GM12878 (cell line): ENCODE measurements at regions of chr5 and their contacts with region 1.

Region 1: DNA sequence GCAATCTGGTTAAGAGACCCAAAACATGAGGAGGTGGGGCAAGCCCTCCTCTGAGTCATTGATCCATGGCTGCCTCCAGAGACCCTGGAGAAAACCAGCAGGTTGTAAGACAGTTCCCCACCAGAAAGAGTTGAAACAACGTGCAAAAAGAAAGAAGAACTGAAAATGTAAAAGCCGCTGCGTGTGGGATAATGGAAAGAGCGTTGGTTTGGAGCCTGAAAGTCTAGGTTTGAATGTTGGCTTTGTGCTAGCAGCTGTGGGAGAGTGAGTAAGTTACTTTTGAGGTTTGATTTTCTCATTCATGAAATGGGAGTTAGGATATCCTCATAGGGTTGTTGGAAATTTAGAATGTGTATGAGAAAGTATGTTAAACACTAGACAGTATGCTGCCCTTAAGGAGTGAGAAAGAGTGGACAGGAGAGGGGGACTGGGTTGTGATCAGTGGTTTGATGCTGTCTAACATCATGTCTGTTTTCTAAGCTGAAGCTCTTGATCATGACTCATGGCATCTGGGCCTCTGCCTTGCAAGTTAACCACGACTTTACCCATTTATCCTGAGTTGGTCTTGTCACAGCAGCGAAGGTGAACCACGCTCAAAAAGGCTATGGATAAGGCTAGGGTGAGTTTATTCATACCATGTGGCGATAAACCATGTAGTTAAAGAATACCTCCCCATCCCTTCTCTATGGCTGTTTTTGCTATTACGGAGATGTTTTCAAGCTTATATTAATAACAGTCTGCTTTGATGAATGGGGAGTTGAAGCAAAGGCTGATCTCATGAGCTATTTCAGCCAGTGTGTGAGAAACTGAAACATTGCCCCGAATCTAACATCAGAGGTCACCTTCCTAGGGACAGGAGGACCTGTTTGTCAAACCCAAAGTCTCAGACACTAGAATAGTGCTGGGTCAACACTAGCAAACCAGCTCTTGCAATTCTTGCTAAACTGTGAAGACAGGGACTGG is 41.3 kb downstream of the ZNF366 start:
- DNase-seq: peak; percentile 92
- ATAC-seq: peak; percentile 83
- H3K4me3 ChIP-seq: peak overlapping the region; percentile 43
- H3K27ac ChIP-seq: peak overlapping the region; percentile 98
- H3K4me1 ChIP-seq: peaks cover 44% of the 10 kb centered on the region
- H3K27me3 ChIP-seq: no peaks in the 10 kb centered on the region
- CTCF ChIP-seq: no peak
- EP300 ChIP-seq: peak; percentile 85 to 92
- POLR2A ChIP-seq: peak; percentile 39; the same call in 1 of the 2 replicates
- RAD21 ChIP-seq: peak; percentile 35; the same call in 1 of the 2 replicates

Region 2: DNA sequence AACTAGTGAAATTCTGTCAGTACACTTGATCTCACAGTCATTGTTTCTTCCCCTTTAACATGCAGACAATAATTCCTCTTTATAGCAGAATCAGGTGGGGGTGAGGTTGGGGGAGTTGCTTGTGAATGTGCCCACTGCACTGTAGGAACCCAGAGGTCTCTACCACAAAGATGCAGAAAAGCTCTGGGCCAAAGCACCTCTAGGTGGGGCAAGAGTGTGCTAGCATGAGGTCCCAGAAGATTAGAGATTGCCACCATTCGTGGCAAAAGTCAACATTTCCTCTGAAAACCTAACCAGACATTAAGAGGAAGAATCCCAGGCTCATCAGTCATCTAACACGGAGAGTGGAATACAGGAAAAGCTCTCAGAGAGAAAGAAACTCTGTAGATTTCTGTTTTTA is 71.2 kb before region 1 on chr5:
- CTCF ChIA-PET with region 1: interaction called, 6 read pairs
- POLR2A ChIA-PET with region 1: no interaction called
- RAD21 ChIA-PET with region 1: interaction called, 14 read pairs
- SMC1A ChIA-PET with region 1: interaction called, 10 read pairs
- in situ Hi-C with region 1: no loop called
- intact Hi-C with region 1: loop called (anchors 5 kb)
- DNase-seq: no peak
- ATAC-seq: peak; percentile 89
- H3K4me3 ChIP-seq: no peak overlapping the region
- H3K27ac ChIP-seq: no peak overlapping the region
- H3K4me1 ChIP-seq: no peaks in the 10 kb centered on the region
- H3K27me3 ChIP-seq: no peaks in the 10 kb centered on the region
- CTCF ChIP-seq: peak; percentile 70 to 74 (median 74)
- EP300 ChIP-seq: no peak
- POLR2A ChIP-seq: no peak
- RAD21 ChIP-seq: peak; percentile 84

Region 3: DNA sequence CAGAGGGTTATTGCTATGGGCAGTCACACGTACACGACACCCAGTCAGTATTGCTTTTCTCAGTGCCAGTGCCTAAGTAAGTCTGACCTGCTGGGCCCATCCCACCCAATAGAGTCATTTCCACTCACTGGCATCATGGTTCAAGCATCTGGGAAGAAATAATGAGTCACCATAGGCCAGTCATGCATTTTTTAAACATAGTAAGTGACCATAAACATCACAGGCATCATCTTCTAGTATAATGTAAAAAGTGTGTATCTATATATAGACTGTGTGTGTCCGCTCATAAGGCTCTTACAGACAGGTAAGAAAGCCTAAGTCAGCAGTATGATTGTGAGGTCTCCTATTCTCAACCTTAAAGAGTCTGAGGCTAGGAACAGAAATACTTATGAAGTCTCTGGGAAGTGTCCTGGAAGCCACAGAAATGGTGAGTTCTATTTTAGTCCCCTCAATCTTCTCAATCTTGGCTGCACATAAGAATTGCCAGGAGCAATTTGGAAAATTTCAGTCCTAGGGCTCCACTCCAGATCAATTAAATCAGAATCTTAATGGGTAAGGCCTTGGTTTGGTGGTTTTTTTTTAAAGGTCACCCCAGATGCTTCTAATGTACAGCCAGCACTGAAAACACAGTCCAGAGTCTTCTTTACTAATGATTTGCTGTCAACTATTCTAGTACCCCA is 23.9 kb before region 1 on chr5:
- CTCF ChIA-PET with region 1: interaction called, 7 read pairs
- POLR2A ChIA-PET with region 1: interaction called, 5 read pairs
- RAD21 ChIA-PET with region 1: interaction called, 24 read pairs
- SMC1A ChIA-PET with region 1: interaction called, 68 read pairs
- in situ Hi-C with region 1: no loop called
- intact Hi-C with region 1: loop called (anchors 5 kb)
- DNase-seq: no peak
- ATAC-seq: peak; percentile 13; the same call in 2 of the 3 replicates
- H3K4me3 ChIP-seq: no peak overlapping the region
- H3K27ac ChIP-seq: no peak overlapping the region
- H3K4me1 ChIP-seq: peaks cover 41% of the 10 kb centered on the region
- H3K27me3 ChIP-seq: no peaks in the 10 kb centered on the region
- CTCF ChIP-seq: no peak
- EP300 ChIP-seq: no peak
- POLR2A ChIP-seq: no peak
- RAD21 ChIP-seq: no peak

Region 4: DNA sequence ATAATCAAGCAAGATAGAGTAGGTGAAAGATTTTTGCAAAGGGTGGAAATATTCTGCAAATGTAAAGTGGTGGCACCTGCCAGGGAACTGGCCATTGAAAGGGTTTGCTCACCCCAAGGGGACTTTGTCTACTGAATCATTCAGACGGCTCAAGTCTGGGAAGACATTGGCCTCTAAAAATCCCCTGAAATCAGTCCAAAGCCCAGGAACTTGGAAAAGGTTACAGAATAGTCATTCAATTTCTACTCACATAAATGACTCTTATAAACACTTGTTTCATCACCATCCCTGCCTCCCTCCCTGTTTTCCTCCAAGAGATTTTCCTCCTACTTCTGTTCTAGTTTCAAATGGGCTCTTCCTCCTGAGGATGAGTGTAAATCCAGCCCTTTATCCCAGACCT is 12.8 kb after region 1 on chr5:
- CTCF ChIA-PET with region 1: interaction called, 4 read pairs
- POLR2A ChIA-PET with region 1: interaction called, 22 read pairs
- RAD21 ChIA-PET with region 1: interaction called, 38 read pairs
- SMC1A ChIA-PET with region 1: interaction called, 76 read pairs
- in situ Hi-C with region 1: no loop called
- intact Hi-C with region 1: loop called (anchors 1 kb)
- DNase-seq: no peak
- ATAC-seq: no peak
- H3K4me3 ChIP-seq: no peak overlapping the region
- H3K27ac ChIP-seq: no peak overlapping the region
- H3K4me1 ChIP-seq: peaks cover 31% of the 10 kb centered on the region
- H3K27me3 ChIP-seq: no peaks in the 10 kb centered on the region
- CTCF ChIP-seq: no peak
- EP300 ChIP-seq: no peak
- POLR2A ChIP-seq: no peak
- RAD21 ChIP-seq: no peak

Region 5: GRCh38 chr5:72584466-72584865 is 118.6 kb after region 1 on chr5:
- CTCF ChIA-PET with region 1: no interaction called
- POLR2A ChIA-PET with region 1: no interaction called
- RAD21 ChIA-PET with region 1: no interaction called
- SMC1A ChIA-PET with region 1: no interaction called
- in situ Hi-C with region 1: no loop called
- intact Hi-C with region 1: loop called (anchors 1 kb)
- DNase-seq: peak; percentile 36
- ATAC-seq: peak; percentile 76
- H3K4me3 ChIP-seq: no peak overlapping the region
- H3K27ac ChIP-seq: no peak overlapping the region
- H3K4me1 ChIP-seq: peaks cover 10% of the 10 kb centered on the region
- H3K27me3 ChIP-seq: no peaks in the 10 kb centered on the region
- CTCF ChIP-seq: 0 out of 6 replicates have a peak, but pooled peaks of 1 of the 3 experiments have one; percentile 10
- EP300 ChIP-seq: no peak
- POLR2A ChIP-seq: no peak
- RAD21 ChIP-seq: peak; percentile 37; the same call in 1 of the 2 replicates

Region 6: GRCh38 chr5:72842816-72843215 is 376.9 kb after region 1 on chr5:
- CTCF ChIA-PET with region 1: no interaction called
- POLR2A ChIA-PET with region 1: no interaction called
- RAD21 ChIA-PET with region 1: no interaction called
- SMC1A ChIA-PET with region 1: no interaction called
- in situ Hi-C with region 1: no loop called
- intact Hi-C with region 1: no loop called
- DNase-seq: no peak
- ATAC-seq: peak; percentile 55; the same call in 2 of the 3 replicates
- H3K4me3 ChIP-seq: no peak overlapping the region
- H3K27ac ChIP-seq: no peak overlapping the region
- H3K4me1 ChIP-seq: peaks cover 6% of the 10 kb centered on the region; the same call in 1 of the 2 replicates
- H3K27me3 ChIP-seq: no peaks in the 10 kb centered on the region
- CTCF ChIP-seq: peak in 1 of 3 experiments; percentile 21; a peak in 3 of 6 replicates
- EP300 ChIP-seq: no peak
- POLR2A ChIP-seq: no peak
- RAD21 ChIP-seq: peak; percentile 37